Uterus (tissue), 4 donors: ENCODE measurements at regions of chr2 and their contacts with region 1.

Region 1: GRCh38 chr2:101844055-101844635 is 146.6 kb downstream of the MAP4K4 start:
- DNase-seq: no peak
- H3K4me3 ChIP-seq: no peak overlapping the region
- H3K27ac ChIP-seq: no peak overlapping the region
- H3K4me1 ChIP-seq: no peaks in the 10 kb centered on the region
- H3K27me3 ChIP-seq: no peaks in the 10 kb centered on the region
- CTCF ChIP-seq: no peak
- POLR2A ChIP-seq: no peak

Region 2: DNA sequence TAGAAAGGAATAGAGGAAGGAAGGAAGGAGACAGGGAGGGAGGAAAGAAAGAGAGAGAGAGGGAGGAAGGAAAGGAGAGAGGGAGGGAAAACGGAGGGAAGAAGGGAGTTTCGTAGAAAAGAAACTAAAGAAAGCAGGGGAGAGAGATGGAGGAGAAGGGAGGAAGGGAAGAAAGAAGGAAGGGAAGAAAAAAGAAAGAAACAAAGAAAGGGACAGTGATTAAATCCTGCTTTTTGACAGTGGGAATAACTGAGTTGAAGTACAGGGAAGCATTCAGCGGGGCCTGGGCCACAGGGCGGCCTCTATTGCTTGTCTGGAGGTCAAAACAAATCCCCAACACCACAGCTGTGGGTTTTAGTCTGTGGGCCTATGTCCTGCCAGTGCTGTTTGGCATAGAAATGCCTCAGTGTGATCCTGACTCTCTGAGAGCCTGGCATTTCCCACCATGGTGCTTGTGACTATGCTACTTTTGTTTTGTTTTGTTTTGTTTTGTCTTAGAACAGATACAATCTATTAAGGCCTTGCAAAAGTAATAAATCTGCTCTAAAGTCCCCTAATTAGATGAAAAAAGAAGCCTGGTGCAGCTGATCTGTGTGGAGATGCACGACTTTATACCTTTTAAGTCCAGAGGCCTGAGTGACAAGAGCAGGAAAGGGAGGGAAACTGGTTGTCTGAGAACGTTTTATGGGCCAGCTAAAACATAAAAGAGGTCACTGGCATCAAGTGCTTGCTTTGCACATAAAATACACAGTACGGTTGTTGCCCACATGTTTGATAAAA is 382.7 kb after region 1 on chr2:
- intact Hi-C with region 1: no loop called
- DNase-seq: no peak
- H3K4me3 ChIP-seq: no peak overlapping the region
- H3K27ac ChIP-seq: peak overlapping the region; percentile 88 to 97
- H3K4me1 ChIP-seq: peaks cover 6 to 8% of the 10 kb centered on the region in 2 donors
- H3K27me3 ChIP-seq: no peaks in the 10 kb centered on the region
- CTCF ChIP-seq: no peak
- POLR2A ChIP-seq: no peak

Region 3: GRCh38 chr2:102451963-102452362 is 607.8 kb after region 1 on chr2:
- intact Hi-C with region 1: loop called (anchors 10 kb)
- DNase-seq: no peak
- H3K4me3 ChIP-seq: no peak overlapping the region
- H3K27ac ChIP-seq: no peak overlapping the region
- H3K4me1 ChIP-seq: no peaks in the 10 kb centered on the region
- H3K27me3 ChIP-seq: no peaks in the 10 kb centered on the region
- CTCF ChIP-seq: no peak
- POLR2A ChIP-seq: no peak